PC-9 (cell line): ENCODE measurements at regions of chr12 and their contacts with region 1.

Region 1: DNA sequence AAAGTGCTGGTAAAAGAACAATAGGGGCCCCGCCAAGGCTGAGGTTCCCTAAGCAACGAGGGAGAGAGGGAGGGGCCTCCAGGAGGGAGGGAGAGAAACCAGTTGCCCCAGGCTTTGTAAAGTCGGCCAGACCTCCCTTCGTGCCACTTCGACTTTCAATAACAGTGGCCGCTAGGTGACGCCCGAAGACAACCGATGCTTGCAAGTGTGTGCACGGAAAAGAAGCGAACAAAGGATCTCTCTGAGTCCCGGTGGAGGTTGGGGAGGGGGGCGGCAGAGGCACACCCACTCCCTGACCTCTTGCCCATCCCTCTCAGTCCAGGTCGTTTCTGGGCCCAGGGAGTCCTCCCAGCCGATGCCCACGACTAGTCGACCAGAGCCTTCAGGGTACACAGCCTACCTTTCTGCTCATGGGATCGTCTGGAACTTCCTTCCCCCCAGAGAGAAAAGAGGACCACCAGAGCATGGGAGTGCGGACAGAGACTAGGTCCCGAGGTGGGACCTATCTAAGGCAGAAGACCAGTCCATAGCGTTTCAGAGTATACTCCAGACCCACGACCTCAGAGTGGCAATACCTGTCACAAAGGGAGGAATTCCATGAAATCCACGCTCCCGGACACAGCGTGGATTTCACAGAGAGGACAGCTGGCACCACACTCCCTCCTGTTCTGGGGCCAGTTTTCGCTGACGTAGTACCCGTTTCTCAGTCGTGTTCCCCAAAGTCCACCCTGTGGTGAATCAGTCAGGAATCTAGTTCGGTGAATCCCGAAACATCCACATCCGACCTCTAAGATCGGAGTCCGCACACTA is 262.7 kb upstream of the ALG10B start:
- DNase-seq: peak; percentile 70 to 82
- H3K4me3 ChIP-seq: peak overlapping the region; percentile 41; the same call in 1 of the 2 replicates
- H3K27ac ChIP-seq: no peak overlapping the region
- H3K4me1 ChIP-seq: peaks cover 17% of the 10 kb centered on the region
- H3K27me3 ChIP-seq: no peaks in the 10 kb centered on the region
- CTCF ChIP-seq: peak; percentile 88

Region 2: DNA sequence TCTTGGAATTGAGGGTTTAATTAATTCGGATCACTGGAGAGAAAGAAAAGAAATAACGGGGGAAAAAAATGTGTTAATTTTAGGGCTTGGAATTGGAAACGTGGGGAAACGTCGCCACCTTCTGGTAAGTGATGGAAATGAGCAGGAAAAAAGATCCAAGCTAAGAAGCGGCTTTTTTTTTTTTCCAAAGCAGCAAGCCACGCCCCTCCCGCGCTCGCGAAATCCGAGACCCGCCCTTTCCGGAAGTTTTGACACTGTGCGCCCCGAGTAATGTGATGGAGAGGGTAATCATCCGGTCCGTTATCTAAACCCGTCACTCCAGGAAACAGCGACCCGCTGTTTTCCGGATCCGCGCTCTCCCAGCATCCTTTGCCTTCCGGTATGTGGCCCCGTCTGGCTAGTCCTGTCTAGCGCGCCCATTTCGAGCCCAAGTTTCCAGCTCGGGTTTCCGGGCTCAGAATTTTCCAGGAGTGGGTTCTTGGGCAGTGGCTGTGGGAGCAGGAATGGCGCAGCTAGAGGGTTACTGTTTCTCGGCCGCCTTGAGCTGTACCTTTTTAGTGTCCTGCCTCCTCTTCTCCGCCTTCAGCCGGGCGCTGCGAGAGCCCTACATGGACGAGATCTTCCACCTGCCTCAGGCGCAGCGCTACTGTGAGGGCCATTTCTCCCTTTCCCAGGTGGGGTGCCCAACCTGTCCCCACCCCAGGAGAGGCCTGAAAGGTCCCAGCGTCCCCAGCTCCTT is 262.7 kb after region 1 on chr12 and contains the start of gene ALG10B:
- CTCF ChIA-PET with region 1: no interaction called
- POLR2A ChIA-PET with region 1: no interaction called
- intact Hi-C with region 1: loop called (anchors 1 kb)
- DNase-seq: peak; percentile 88 to 91
- H3K4me3 ChIP-seq: peak within 1 kb of the TSS; percentile 60
- H3K27ac ChIP-seq: peak within 1 kb of the TSS; percentile 37
- H3K4me1 ChIP-seq: peaks cover 7% of the 10 kb centered on the region; the same call in 1 of the 2 replicates
- H3K27me3 ChIP-seq: no peaks in the 10 kb centered on the region
- CTCF ChIP-seq: peak; percentile 82
- total RNA-seq, gene ALG10B: 13.1 and 14.4 TPM in 2 replicates

Region 3: GRCh38 chr12:38456537-38457159 is 402.8 kb after region 1 on chr12:
- CTCF ChIA-PET with region 1: no interaction called
- POLR2A ChIA-PET with region 1: no interaction called
- intact Hi-C with region 1: no loop called
- DNase-seq: no peak
- H3K4me3 ChIP-seq: no peak overlapping the region
- H3K27ac ChIP-seq: no peak overlapping the region
- H3K4me1 ChIP-seq: no peaks in the 10 kb centered on the region
- H3K27me3 ChIP-seq: no peaks in the 10 kb centered on the region
- CTCF ChIP-seq: no peak